Calu3 (cell line): ENCODE measurements at regions of chr19 and their contacts with region 1.

Region 1: DNA sequence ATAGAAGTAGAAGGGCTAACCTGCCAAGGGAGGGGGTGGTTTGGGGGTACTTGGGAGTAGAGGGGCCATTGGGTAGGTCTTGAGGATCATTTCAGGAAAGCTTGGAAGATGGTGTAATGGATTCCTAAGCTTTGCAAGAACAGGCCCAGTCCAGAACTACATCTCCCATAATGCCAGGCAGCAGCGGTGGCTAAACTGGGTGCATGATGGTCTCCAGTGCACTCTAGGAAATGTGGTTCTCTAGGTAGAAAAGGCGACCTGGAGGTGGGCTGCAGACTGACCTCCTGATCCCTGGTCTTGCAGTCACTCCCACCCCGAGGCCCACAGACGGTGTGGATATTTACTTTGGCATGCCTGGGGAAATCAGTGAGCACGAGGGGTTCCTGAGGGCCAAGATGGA is 3.8 kb downstream of the APLP1 start:
- DNase-seq: no peak
- H3K4me3 Mint-ChIP-seq: no peak overlapping the region
- H3K27ac Mint-ChIP-seq: no peak overlapping the region
- H3K4me1 Mint-ChIP-seq: peaks cover 13% of the 10 kb centered on the region
- H3K27me3 Mint-ChIP-seq: peaks cover 66% of the 10 kb centered on the region
- CTCF ChIP-seq: no peak

Region 2: DNA sequence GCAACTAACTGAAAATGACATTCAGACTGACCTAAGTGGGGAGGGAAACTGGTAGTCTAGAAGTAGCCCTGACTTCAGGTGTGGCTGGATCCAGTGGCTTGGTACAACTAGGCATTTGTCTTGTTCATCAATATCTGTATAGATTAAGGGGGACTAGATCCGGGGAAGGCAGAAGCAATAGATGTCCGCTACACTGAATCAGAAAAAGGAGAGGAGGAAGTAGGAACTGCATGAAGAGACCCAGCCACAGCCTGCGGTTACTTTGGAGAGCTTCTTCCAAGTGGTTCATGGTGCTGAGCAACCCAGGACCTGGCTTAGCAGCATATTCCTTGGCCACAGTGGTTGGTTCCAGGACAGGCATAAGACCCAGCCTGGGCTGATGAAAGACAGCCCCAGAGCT is 49.6 kb before region 1 on chr19:
- CTCF ChIA-PET with region 1: no interaction called
- intact Hi-C with region 1: loop called (anchors 2 kb)
- DNase-seq: no peak
- H3K4me3 Mint-ChIP-seq: no peak overlapping the region
- H3K27ac Mint-ChIP-seq: no peak overlapping the region
- H3K4me1 Mint-ChIP-seq: no peaks in the 10 kb centered on the region
- H3K27me3 Mint-ChIP-seq: peaks cover 77% of the 10 kb centered on the region
- CTCF ChIP-seq: no peak

Region 3: DNA sequence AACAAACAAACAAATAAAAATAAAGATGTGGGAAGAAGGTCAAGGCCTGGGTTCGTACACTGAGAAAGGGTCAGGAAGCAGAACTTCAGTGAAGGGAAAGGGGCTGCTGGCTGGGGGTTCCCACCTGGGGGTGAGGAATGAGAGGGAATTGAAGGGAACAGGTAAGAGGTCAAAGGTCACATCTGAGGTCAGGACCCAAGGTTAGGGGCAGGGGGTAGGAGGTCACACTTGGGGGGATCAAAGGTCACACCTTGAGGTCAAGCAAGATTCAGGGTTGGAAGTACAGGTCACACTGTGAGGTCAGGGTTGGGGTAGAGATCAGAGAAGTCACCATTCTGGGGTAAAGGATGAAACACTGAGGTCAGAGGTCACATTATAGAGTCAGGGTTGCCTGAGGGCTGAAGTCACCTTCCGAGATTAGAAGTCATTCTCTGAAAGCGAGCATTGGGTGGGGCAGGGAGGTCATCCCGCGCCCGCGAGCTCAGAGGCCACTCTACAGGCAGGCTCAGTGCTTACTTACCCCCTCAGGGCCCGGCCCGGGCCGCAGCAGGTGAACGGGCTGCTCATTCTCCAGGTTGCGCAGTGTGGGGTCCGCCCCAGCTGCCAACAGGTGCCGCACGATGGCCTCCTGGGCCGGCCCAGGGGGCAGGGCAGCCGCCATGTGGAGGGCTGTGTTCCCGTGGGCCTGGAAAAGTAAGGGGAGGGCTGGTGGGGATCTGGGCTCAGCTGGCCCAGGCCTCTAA is 17.4 kb after region 1 on chr19:
- CTCF ChIA-PET with region 1: no interaction called
- intact Hi-C with region 1: no loop called
- DNase-seq: no peak
- H3K4me3 Mint-ChIP-seq: no peak overlapping the region
- H3K27ac Mint-ChIP-seq: no peak overlapping the region
- H3K4me1 Mint-ChIP-seq: no peaks in the 10 kb centered on the region
- H3K27me3 Mint-ChIP-seq: no peaks in the 10 kb centered on the region
- CTCF ChIP-seq: no peak

Region 4: GRCh38 chr19:35977446-35978222 is 105.5 kb after region 1 on chr19:
- CTCF ChIA-PET with region 1: no interaction called
- intact Hi-C with region 1: no loop called
- DNase-seq: peak; percentile 37
- H3K4me3 Mint-ChIP-seq: no peak overlapping the region
- H3K27ac Mint-ChIP-seq: no peak overlapping the region
- H3K4me1 Mint-ChIP-seq: no peaks in the 10 kb centered on the region
- H3K27me3 Mint-ChIP-seq: peaks cover 74% of the 10 kb centered on the region
- CTCF ChIP-seq: no peak